IMR-90 (cell line): ENCODE measurements at regions of chr2 and their contacts with region 1.

Region 1: DNA sequence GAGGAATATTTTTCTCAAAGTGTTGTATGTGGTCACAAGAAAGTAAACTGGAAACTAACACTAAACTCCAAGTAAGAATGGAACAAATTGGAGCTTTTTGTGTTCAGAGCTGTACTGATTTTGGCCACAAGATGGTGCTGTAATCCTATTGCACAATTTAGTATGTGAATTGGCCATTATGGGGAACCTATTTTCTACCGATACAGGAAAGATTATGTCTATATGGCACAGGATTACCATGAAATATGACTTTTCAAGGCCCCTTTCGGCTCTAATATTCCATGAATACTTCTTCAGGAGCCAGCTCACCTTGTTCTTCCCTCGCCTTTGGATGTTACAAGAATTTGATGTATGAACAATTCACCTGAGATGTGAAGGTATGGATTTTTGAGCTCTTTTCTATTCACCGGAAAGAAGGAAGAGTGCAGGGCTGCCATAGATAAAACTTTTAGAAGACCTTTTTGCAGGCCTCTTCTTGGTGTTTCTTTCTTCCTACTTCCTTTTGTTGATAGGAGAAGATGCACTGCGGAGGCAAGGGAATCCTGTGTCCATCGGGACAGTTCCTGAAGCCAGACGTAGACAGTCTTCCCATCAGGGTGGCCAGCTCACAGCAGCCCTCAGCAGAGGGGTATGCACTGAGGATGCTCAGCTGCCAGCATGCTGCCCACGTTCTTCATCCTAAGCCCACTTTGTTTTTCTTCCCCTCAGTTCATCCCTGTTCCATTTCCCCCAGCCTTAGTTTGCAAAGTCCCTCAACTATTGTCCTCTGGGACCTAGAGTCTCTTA is 13.3 kb downstream of the MRPL44 start:
- DNase-seq: peak; percentile 67
- ATAC-seq: peak; percentile 80
- H3K4me3 ChIP-seq: no peak overlapping the region
- H3K27ac ChIP-seq: no peak overlapping the region
- H3K4me1 ChIP-seq: no peaks in the 10 kb centered on the region
- H3K27me3 ChIP-seq: no peaks in the 10 kb centered on the region
- CTCF ChIP-seq: peak; percentile 95
- POLR2A ChIP-seq: no peak
- RAD21 ChIP-seq: peak; percentile 92

Region 2: GRCh38 chr2:223957092-223957851 is 13.3 kb before region 1 on chr2 and contains the start of gene MRPL44:
- CTCF ChIA-PET with region 1: interaction called, 10 read pairs
- POLR2A ChIA-PET with region 1: no interaction called
- dilution Hi-C with region 1: no loop called
- in situ Hi-C with region 1: no loop called
- intact Hi-C with region 1: no loop called
- DNase-seq: peak; percentile 93
- ATAC-seq: peak; percentile 100
- H3K4me3 ChIP-seq: peak within 1 kb of the TSS; percentile 86
- H3K27ac ChIP-seq: peak within 1 kb of the TSS; percentile 89
- H3K4me1 ChIP-seq: peaks cover 5% of the 10 kb centered on the region; the same call in 1 of the 2 replicates
- H3K27me3 ChIP-seq: no peaks in the 10 kb centered on the region
- CTCF ChIP-seq: no peak
- POLR2A ChIP-seq: peak; percentile 85
- RAD21 ChIP-seq: no peak
- total RNA-seq, gene MRPL44: 20.1 and 30.3 TPM in 2 replicates

Region 3: DNA sequence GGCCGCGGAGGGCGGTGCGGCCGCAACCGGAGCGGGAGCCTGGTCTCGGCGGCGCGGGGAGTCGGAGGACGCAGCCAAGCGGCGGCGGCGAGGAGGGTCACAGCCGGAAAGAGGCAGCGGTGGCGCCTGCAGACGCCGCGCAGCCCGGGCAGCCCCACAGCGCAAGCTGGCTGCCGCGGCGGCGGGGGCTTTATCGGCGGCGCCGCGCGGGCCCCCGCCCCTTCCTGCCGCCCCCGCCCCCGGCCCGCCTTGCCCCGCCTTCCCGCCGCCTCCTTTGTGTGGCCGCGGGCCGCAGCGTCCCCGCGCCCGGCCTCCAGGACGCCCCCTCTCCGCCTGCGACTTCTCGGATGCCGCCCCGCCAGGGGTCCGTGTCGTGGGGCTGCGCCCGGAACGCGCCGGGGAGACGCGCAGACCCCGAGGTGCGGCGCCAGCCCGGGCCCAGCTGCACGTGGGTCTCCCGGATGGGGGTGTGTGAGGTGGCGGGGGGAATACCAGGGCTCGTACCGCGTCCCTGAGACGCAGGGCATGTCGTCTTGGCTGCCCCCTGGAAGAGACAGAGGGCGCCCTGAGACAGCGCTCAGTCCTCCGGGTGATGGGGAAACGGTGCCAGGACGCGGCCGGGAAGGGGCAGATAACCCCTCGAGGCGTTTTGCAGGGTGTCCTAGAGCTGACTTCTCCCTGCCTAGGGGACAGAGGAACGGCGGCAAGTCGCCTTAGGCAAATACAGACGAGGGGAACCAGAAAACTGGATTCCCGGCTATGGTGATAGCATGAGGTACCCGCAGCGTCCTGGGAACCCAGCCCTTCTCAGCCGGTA is 68.8 kb after region 1 on chr2 and contains the start of gene SERPINE2:
- CTCF ChIA-PET with region 1: no interaction called
- POLR2A ChIA-PET with region 1: no interaction called
- dilution Hi-C with region 1: no loop called
- in situ Hi-C with region 1: no loop called
- intact Hi-C with region 1: loop called (anchors 1 kb)
- DNase-seq: peak; percentile 37
- ATAC-seq: peak; percentile 81
- H3K4me3 ChIP-seq: peak within 1 kb of the TSS; percentile 99
- H3K27ac ChIP-seq: peak within 1 kb of the TSS; percentile 29; the same call in 1 of the 2 replicates
- H3K4me1 ChIP-seq: peaks cover 15% of the 10 kb centered on the region
- H3K27me3 ChIP-seq: peaks cover 13% of the 10 kb centered on the region
- CTCF ChIP-seq: peak; percentile 52
- POLR2A ChIP-seq: no peak
- RAD21 ChIP-seq: peak; percentile 64
- total RNA-seq, gene SERPINE2: 21.1 and 24.0 TPM in 2 replicates

Region 4: GRCh38 chr2:224217962-224218347 is 247.4 kb after region 1 on chr2:
- CTCF ChIA-PET with region 1: no interaction called
- POLR2A ChIA-PET with region 1: no interaction called
- dilution Hi-C with region 1: no loop called
- in situ Hi-C with region 1: no loop called
- intact Hi-C with region 1: no loop called
- DNase-seq: peak; percentile 90
- ATAC-seq: peak; percentile 46
- H3K4me3 ChIP-seq: no peak overlapping the region
- H3K27ac ChIP-seq: no peak overlapping the region
- H3K4me1 ChIP-seq: peaks cover 9% of the 10 kb centered on the region
- H3K27me3 ChIP-seq: no peaks in the 10 kb centered on the region
- CTCF ChIP-seq: no peak
- POLR2A ChIP-seq: no peak
- RAD21 ChIP-seq: no peak

Region 5: GRCh38 chr2:224347176-224348051 is 376.9 kb after region 1 on chr2:
- CTCF ChIA-PET with region 1: no interaction called
- POLR2A ChIA-PET with region 1: no interaction called
- dilution Hi-C with region 1: no loop called
- in situ Hi-C with region 1: no loop called
- intact Hi-C with region 1: loop called (anchors 2 kb)
- DNase-seq: no peak
- ATAC-seq: 0 out of 2 replicates have a peak, but pooled peaks have one; percentile 28
- H3K4me3 ChIP-seq: no peak overlapping the region
- H3K27ac ChIP-seq: no peak overlapping the region
- H3K4me1 ChIP-seq: peaks cover 5% of the 10 kb centered on the region; the same call in 1 of the 2 replicates
- H3K27me3 ChIP-seq: peaks cover 3% of the 10 kb centered on the region; the same call in 1 of the 2 replicates
- CTCF ChIP-seq: no peak
- POLR2A ChIP-seq: no peak
- RAD21 ChIP-seq: no peak

Region 6: DNA sequence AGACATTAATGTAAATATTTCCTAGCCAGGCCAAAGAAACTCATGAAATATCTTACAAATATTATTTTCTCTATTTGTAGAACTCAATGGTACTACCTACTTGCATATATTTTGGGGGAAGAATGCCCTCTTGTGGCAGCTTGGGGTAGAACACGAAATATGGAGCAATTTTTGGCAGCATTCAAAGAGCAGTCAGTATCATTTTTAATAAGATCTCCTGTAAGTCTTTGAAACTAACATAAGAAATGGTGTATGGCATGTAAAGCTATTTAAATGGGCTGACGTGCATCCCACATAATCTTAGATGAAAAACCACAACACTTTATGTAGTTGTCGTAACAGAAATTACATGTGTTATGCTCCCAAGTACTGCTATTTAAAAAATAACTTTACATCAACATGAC is 807.9 kb after region 1 on chr2:
- CTCF ChIA-PET with region 1: no interaction called
- POLR2A ChIA-PET with region 1: no interaction called
- dilution Hi-C with region 1: no loop called
- in situ Hi-C with region 1: no loop called
- intact Hi-C with region 1: loop called (anchors 5 kb)
- DNase-seq: peak; percentile 60
- ATAC-seq: peak; percentile 70; the same call in 1 of the 2 replicates
- H3K4me3 ChIP-seq: no peak overlapping the region
- H3K27ac ChIP-seq: no peak overlapping the region
- H3K4me1 ChIP-seq: 0 out of 2 replicates have a peak, but pooled peaks cover 2% of the 10 kb centered on the region
- H3K27me3 ChIP-seq: no peaks in the 10 kb centered on the region
- CTCF ChIP-seq: peak; percentile 73
- POLR2A ChIP-seq: no peak
- RAD21 ChIP-seq: peak; percentile 62